Activated CD4-positive, alpha-beta memory T cell treated with anti-CD3 and anti-CD28 coated beads for 36 hours (primary cell): ENCODE measurements at regions of chr7 and their contacts with region 1.

Region 1: DNA sequence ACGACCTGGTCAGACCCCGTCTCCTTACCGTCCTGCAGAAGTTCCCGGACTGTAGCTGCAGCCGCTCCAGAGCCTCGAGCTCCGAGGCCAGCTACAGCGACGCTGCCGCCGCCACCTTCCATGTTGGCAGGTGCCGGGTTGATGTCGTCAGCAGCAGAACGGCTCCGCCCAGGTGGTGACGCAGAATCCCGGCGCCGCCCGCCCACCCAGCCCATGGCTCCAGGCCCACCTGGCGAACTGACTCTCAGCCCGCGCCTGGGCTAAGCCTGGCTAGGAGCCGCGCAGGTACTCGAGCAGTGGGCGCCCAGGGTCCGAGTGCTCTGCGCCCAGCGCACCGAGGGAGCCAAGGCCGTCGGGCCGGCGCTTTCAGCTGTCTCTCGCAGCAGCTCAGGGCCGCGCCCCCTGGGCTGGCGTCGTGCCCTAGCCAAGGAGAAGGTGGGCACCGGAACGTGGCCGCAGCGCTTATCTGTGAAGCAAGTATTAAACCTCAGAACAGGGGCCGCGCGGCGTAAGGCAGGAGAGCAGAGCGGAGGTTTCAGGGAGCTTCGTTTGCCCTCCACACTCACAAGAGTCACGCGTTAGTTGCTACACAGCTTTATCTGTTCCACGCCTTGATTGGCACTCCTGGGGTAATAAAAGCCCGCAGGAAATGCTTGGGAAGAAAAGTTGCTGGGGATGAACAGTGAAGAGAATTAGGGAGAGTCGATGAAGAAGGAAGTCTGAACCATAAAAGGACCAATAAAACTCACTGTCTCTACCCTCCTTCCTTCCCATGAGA is at the starts of genes COG5 and DUS4L:
- DNase-seq: peak; percentile 92
- H3K4me3 Mint-ChIP-seq: peak within 1 kb of the TSS; percentile 92
- H3K27ac Mint-ChIP-seq: peak within 1 kb of the TSS; percentile 90
- H3K4me1 Mint-ChIP-seq: peaks cover 57% of the 10 kb centered on the region
- H3K27me3 Mint-ChIP-seq: no peaks in the 10 kb centered on the region
- total RNA-seq, gene COG5: 38.9 to 40.7 TPM
- total RNA-seq, gene DUS4L: 11.8 to 12.4 TPM

Region 2: DNA sequence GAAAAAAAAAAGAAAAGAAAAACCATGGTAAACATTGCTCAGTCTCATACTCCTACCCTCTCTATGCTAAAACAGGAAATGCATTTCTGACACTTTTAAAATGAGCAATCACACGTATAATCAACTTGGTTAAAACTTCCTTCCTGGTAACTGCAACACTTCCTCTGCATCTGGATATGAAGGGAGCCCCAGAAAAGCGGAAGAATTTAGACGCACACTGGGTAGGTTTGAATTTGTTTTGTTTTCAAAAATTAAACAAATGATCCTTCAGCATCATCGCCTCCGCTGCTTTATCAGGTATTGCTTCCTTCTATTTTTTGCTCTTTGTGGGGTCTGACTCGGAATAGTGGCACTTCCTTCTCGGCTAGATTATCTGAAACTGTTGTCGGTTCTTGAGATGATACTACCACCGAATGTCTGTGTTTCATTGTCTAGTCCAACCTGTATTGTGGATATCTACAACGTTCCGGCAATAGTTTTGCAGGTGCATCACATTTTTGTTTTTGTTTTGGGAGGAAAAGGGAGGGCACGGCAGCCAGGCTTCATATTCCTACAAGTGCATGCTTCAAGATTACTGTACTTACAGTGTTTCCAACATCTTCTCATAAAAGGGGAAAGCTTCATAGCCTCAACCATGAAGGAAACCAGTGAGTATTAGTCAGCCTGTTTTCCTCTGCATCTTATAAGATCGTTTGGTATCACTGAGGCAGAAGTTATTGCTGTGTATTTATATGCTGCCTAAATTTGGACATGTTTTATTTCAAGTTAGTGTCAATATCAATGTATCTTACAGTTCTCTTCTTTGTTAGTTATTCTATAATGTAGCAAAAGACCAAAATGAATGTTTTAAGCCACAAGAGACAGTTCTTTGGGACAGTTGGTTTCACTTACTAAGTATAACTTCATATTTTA is 698.6 kb before region 1 on chr7 and contains the start of gene PIK3CG:
- CTCF ChIA-PET with region 1: no interaction called
- POLR2A ChIA-PET with region 1: no interaction called
- intact Hi-C with region 1: loop called (anchors 5 kb)
- DNase-seq: no peak
- H3K4me3 Mint-ChIP-seq: peak within 1 kb of the TSS; percentile 83
- H3K27ac Mint-ChIP-seq: peak within 1 kb of the TSS; percentile 79
- H3K4me1 Mint-ChIP-seq: peaks cover 73% of the 10 kb centered on the region
- H3K27me3 Mint-ChIP-seq: no peaks in the 10 kb centered on the region
- total RNA-seq, gene PIK3CG: 10.9 to 11.3 TPM

Region 3: GRCh38 chr7:107130487-107131225 is 433.3 kb before region 1 on chr7:
- CTCF ChIA-PET with region 1: no interaction called
- POLR2A ChIA-PET with region 1: no interaction called
- intact Hi-C with region 1: no loop called
- DNase-seq: no peak
- H3K4me3 Mint-ChIP-seq: no peak overlapping the region
- H3K27ac Mint-ChIP-seq: no peak overlapping the region
- H3K4me1 Mint-ChIP-seq: peaks cover 9% of the 10 kb centered on the region
- H3K27me3 Mint-ChIP-seq: no peaks in the 10 kb centered on the region

Region 4: GRCh38 chr7:107579885-107580715 is 16.1 kb after region 1 on chr7 and contains the start of gene BCAP29:
- CTCF ChIA-PET with region 1: interaction called, 5 read pairs
- POLR2A ChIA-PET with region 1: interaction called, 9 read pairs
- intact Hi-C with region 1: loop called (anchors 1 kb)
- DNase-seq: peak; percentile 76
- H3K4me3 Mint-ChIP-seq: peak within 1 kb of the TSS; percentile 87
- H3K27ac Mint-ChIP-seq: peak within 1 kb of the TSS; percentile 78
- H3K4me1 Mint-ChIP-seq: peaks cover 19% of the 10 kb centered on the region
- H3K27me3 Mint-ChIP-seq: no peaks in the 10 kb centered on the region
- total RNA-seq, gene BCAP29: 42.3 to 42.9 TPM

Region 5: DNA sequence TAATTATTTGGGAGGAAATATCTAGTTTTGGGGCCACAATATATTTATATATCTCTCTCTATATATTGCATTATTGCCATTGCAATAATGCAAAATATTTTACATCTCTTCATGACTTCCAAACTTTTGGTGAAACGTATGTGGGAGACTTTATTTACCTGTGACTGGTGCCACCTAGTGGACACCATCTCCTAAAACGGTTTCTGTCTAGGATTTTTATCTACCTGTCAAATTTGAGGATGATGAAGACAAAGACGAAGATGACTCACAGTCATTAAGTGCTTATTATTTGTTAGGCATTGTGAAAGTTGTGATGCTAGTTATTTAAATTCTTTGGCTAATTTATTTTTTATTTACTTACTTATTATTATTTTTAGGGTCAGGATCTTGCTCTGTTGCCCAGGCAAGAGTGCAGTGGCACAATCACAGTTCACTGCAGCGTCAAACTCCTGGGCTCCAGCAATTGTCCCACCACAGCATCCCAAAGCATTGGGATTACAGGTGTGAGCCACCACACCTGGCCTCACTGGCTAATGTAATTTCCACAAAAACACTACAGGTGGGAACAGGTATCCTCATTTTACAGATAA is 161.3 kb after region 1 on chr7:
- CTCF ChIA-PET with region 1: interaction called, 3 read pairs
- POLR2A ChIA-PET with region 1: no interaction called
- intact Hi-C with region 1: loop called (anchors 5 kb)
- DNase-seq: peak; percentile 42
- H3K4me3 Mint-ChIP-seq: no peak overlapping the region
- H3K27ac Mint-ChIP-seq: no peak overlapping the region
- H3K4me1 Mint-ChIP-seq: no peaks in the 10 kb centered on the region
- H3K27me3 Mint-ChIP-seq: peaks cover 3% of the 10 kb centered on the region

Region 6: GRCh38 chr7:107816011-107816566 is 252.1 kb after region 1 on chr7:
- CTCF ChIA-PET with region 1: no interaction called
- POLR2A ChIA-PET with region 1: no interaction called
- intact Hi-C with region 1: loop called (anchors 5 kb)
- DNase-seq: no peak
- H3K4me3 Mint-ChIP-seq: no peak overlapping the region
- H3K27ac Mint-ChIP-seq: peak overlapping the region; percentile 64
- H3K4me1 Mint-ChIP-seq: peaks cover 31% of the 10 kb centered on the region
- H3K27me3 Mint-ChIP-seq: no peaks in the 10 kb centered on the region

Region 7: DNA sequence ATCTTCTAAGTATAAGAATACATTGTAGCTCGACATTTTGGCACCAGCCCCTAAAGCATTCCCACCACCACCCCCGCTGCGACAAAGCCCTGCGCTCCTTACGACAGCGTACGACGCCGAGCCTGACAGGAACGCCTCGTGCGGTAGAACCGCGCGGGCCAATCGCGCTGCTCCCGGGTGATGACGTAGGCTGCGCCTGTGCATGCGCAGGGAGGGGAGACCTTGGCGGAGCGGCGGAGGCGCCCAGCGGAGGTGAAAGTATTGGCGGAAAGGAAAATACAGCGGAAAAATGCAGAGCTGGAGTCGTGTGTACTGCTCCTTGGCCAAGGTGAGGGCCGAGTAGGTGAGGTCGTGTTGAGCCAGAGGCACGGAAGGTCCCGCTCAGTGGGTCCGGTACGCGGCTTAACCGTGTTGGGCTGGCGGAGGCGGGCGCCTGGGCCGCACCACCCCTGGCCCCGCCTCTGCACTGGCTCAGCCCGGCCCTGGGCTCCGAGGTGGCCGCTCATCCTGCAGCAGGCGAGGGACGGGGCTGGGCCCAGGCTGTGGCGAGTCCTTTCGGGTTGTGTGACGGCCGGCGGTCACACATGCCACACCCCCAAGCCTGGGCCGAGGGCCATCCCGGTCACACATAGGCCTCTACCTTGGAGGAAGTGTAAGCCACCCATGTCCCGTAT is 327.1 kb after region 1 on chr7 and contains the start of gene DLD:
- CTCF ChIA-PET with region 1: no interaction called
- POLR2A ChIA-PET with region 1: no interaction called
- intact Hi-C with region 1: loop called (anchors 2 kb)
- DNase-seq: peak; percentile 97
- H3K4me3 Mint-ChIP-seq: peak within 1 kb of the TSS; percentile 89
- H3K27ac Mint-ChIP-seq: peak within 1 kb of the TSS; percentile 94
- H3K4me1 Mint-ChIP-seq: peaks cover 36% of the 10 kb centered on the region
- H3K27me3 Mint-ChIP-seq: no peaks in the 10 kb centered on the region
- total RNA-seq, gene DLD: 103 to 116 TPM